ENCODE measurements at regions of chr18 and their contacts with region 1.

Region 1: DNA sequence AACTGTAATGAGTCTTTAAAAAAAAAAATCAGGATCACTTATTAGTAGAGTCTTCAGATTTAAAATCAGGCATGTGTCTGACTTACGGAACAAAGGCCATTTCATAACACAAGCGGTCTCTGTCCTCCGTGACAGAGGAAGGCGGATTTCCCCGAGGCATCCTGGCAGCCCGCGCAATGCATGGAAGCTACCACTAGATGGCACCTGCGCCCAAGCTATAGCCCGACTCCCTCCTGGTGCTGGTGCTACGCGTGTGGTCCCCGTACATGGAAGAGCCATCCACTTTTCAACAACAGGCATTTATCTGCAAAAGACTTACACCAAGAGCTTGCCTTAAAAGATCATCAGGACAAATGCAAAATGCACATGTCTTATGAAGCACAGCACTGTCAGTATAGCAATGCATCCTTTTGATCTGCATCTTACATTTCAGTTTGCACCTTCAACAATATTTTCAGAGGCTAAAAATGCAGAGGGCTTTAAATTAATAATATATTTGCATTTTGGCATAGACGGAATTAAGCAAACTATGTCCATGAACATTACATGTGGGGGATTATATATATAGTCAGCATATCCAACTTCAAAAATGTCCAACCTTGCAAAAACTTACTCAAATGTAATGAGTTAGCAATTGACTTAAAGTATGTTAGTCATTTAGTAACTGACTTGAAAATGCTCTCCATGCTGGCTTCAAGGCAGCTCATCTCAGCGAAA is 96.0 kb downstream of the ZNF516 start:
- DNase-seq: peak; percentile 66
- ATAC-seq: peak; percentile 95
- H3K4me3 Mint-ChIP-seq: no peak overlapping the region
- H3K27ac Mint-ChIP-seq: no peak overlapping the region
- H3K4me1 Mint-ChIP-seq: peaks cover 7% of the 10 kb centered on the region
- H3K27me3 Mint-ChIP-seq: no peaks in the 10 kb centered on the region
- CTCF ChIP-seq: peak; percentile 94

Region 2: GRCh38 chr18:76410660-76411417 is 11.8 kb after region 1 on chr18:
- CTCF ChIA-PET with region 1: interaction called, 12 read pairs
- POLR2A ChIA-PET with region 1: no interaction called
- intact Hi-C with region 1: no loop called
- DNase-seq: no peak
- ATAC-seq: no peak
- H3K4me3 Mint-ChIP-seq: no peak overlapping the region
- H3K27ac Mint-ChIP-seq: no peak overlapping the region
- H3K4me1 Mint-ChIP-seq: peaks cover 6% of the 10 kb centered on the region
- H3K27me3 Mint-ChIP-seq: no peaks in the 10 kb centered on the region
- CTCF ChIP-seq: no peak

Region 3: GRCh38 chr18:76573325-76574025 is 174.4 kb after region 1 on chr18:
- CTCF ChIA-PET with region 1: no interaction called
- POLR2A ChIA-PET with region 1: no interaction called
- intact Hi-C with region 1: loop called (anchors 1 kb)
- DNase-seq: no peak
- ATAC-seq: no peak
- H3K4me3 Mint-ChIP-seq: no peak overlapping the region
- H3K27ac Mint-ChIP-seq: no peak overlapping the region
- H3K4me1 Mint-ChIP-seq: no peaks in the 10 kb centered on the region
- H3K27me3 Mint-ChIP-seq: peaks cover 13% of the 10 kb centered on the region
- CTCF ChIP-seq: no peak

Region 4: DNA sequence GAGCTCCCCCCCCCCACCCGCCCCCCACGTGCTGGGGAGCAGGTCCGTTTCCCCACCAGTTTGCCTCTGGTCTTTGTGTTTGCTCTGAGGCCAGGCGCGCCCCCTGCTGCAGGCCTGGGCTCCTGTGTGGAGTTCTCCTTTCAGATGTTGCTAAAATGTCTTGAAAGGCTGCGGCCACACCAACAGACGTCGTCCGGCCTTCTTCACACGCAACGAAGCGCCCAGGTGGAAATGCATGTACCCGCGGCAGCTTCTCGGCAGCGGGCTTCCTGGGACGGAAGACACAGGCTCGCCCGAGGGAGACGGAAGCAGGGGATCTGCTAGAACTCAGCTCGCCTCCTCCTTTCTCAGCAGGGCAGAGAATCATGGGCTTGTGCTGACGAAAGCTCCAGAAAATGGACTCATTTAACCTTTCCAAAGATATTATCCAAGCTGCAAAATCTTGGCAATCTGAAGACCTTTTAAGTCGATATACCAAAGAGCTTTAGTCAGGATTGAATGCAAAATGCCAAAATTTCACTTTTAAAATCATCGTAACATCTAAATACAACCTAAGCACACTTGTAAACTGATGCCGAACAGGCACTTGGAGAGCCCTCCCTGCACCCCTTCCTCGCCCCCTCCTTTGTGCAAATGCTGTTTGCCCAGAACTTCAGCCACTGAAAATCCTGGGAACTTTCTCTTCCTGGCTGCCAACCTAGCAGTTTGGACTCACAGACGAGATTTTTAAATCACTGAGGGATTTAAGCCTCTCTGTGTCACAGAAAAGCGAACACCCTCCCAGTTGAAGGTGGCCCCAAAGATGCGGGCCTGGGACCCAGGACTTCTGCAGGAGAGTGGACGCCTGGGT is 221.5 kb after region 1 on chr18:
- CTCF ChIA-PET with region 1: interaction called, 55 read pairs
- POLR2A ChIA-PET with region 1: no interaction called
- intact Hi-C with region 1: loop called (anchors 1 kb)
- DNase-seq: peak; percentile 27
- ATAC-seq: peak; percentile 62
- H3K4me3 Mint-ChIP-seq: no peak overlapping the region
- H3K27ac Mint-ChIP-seq: no peak overlapping the region
- H3K4me1 Mint-ChIP-seq: peaks cover 7% of the 10 kb centered on the region
- H3K27me3 Mint-ChIP-seq: peaks cover 35% of the 10 kb centered on the region
- CTCF ChIP-seq: no peak

Region 5: GRCh38 chr18:76662626-76663025 is 263.6 kb after region 1 on chr18:
- CTCF ChIA-PET with region 1: interaction called, 3 read pairs
- POLR2A ChIA-PET with region 1: no interaction called
- intact Hi-C with region 1: loop called (anchors 1 kb)
- DNase-seq: no peak
- ATAC-seq: no peak
- H3K4me3 Mint-ChIP-seq: no peak overlapping the region
- H3K27ac Mint-ChIP-seq: no peak overlapping the region
- H3K4me1 Mint-ChIP-seq: no peaks in the 10 kb centered on the region
- H3K27me3 Mint-ChIP-seq: peaks cover 9% of the 10 kb centered on the region
- CTCF ChIP-seq: no peak

Region 6: DNA sequence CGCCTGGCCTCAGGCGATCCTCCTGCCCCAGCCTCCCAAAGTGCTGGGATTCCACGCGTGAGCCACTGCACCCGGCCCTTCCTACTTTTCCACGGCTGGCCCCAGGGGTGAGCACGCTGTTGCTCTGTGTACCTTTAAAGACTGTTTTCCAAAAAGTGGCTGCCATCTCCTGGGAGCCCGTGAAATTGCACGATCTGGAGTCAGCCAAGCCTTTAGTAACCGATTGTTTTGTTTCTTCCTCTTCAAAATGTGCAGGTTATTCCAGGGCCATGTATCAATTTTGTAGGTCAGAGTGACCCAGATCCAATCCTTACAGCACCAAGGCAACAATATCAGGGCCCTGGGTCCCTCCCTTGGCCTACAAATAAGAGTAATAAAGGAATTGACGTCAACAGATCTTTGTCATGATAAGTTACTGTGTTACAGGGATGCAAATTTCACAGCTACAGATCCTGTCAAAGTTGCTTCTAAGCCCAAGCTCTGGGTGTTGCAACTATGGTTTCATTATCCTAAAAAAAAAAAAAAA is 287.7 kb after region 1 on chr18:
- CTCF ChIA-PET with region 1: interaction called, 7 read pairs
- POLR2A ChIA-PET with region 1: no interaction called
- intact Hi-C with region 1: loop called (anchors 1 kb)
- DNase-seq: no peak
- ATAC-seq: no peak
- H3K4me3 Mint-ChIP-seq: no peak overlapping the region
- H3K27ac Mint-ChIP-seq: no peak overlapping the region
- H3K4me1 Mint-ChIP-seq: no peaks in the 10 kb centered on the region
- H3K27me3 Mint-ChIP-seq: peaks cover 4% of the 10 kb centered on the region
- CTCF ChIP-seq: no peak

Region 7: DNA sequence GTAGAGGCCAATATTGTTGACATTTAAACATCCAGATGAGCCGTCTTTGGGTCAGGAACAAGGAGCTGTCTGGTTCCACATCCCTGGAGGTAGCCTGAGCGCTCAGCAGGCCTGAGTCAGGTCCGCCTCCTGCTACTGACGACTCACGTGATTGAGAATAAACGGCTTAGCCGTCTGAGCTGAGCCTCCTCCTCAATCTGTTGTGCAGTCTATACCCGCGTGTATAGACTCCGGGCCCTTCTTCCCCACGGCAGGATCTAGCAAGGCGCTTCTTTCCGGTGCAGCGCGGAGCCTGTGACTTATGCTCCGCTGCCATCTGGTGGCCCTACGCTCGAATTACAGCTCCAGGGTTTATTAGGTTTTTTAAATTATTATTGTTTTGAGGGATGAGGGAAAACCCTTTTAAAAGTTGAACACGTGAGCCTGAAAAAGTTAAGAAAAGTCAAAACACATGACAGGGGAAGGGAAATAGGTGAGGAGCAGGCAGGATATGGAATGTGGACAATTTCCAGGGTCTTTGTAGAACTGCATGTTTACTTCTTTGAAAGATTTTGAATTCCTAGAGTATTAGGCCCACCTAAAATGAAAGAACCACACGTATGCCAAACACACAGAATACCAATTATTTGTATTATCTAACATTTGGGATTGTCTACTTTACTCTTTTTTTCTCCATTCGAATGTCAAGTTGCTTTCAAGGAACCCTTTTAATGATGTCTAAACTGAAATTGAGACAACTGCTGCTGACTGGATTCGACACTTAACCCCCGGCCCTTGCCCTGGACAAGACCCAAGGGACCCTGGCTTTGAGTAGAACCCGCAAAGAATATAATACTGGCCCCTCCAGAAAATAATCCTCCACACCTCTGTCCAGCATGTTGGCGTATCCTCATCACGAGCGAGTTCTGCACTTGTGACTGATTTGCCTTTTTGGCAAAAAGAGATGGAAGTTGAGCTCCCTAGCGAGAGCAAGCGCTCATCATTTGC is 310.9 kb after region 1 on chr18:
- CTCF ChIA-PET with region 1: interaction called, 137 read pairs
- POLR2A ChIA-PET with region 1: no interaction called
- intact Hi-C with region 1: loop called (anchors 1 kb)
- DNase-seq: peak; percentile 34
- ATAC-seq: peak; percentile 79
- H3K4me3 Mint-ChIP-seq: no peak overlapping the region
- H3K27ac Mint-ChIP-seq: no peak overlapping the region
- H3K4me1 Mint-ChIP-seq: peaks cover 2% of the 10 kb centered on the region
- H3K27me3 Mint-ChIP-seq: no peaks in the 10 kb centered on the region
- CTCF ChIP-seq: no peak

Measured in activated B cell treated with CpG ODN at 0.5 μM for 24 hours (primary cell).